Activated CD8-positive, alpha-beta T cell treated with anti-CD3 and anti-CD28 coated beads, Interleukin-2, amount 10 ng/mL, durations not matched to agents 7 days and 5 days (primary cell): ENCODE measurements at regions of chr1 and their contacts with region 1.

Region 1: DNA sequence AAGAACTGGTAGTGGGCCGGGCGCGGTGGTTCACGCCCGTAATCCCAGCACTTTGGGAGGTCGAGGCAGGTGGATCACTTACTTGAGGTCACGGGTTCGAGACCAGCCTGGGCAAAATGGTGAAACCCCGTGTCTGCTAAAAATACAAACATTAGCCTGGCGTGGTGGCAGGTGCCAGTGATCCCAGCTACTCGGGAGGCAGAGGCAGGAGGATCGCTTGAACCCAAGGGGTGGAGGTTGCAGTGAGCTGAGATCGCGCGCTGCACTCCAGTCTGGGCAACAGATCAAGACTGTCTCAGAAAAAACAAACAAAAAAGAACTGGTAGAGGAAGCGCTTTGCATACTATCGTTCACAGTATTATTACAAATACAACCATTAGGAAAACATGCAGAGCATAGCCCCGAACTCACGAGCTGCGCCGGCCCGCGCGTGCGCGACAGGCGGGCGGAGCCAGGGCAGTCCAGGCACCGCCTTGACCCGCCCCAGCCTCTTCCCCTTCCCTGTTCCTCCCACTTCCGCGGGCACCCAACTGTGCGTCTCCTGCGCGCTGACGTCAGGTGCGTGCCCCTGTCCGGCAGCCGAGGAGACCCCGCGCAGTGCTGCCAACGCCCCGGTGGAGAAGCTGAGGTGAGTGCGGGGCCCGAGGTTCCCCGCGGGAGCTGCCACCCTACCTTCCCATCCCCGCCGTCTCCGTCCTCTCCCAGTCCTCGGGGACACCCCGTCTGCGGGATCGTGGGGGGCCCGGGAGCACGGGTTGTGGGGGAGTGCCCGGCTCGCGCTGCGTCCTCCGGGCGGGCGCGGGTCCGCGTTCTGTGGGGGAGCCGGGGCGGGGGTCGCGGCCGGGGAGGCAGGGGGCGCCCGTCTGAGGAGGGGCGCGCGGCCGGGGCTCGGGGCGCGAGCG is at the start of gene CDC42:
- DNase-seq: peak; percentile 98
- ATAC-seq: peak; percentile 92
- H3K4me3 Mint-ChIP-seq: peak within 1 kb of the TSS; percentile 93
- H3K27ac Mint-ChIP-seq: peak within 1 kb of the TSS; percentile 96
- H3K4me1 Mint-ChIP-seq: peaks cover 66% of the 10 kb centered on the region
- H3K27me3 Mint-ChIP-seq: no peaks in the 10 kb centered on the region
- total RNA-seq, gene CDC42: 365 to 389 TPM

Region 2: GRCh38 chr1:22025368-22026155 is 26.8 kb before region 1 on chr1:
- CTCF ChIA-PET with region 1: interaction called, 210 read pairs
- POLR2A ChIA-PET with region 1: interaction called, 310 read pairs
- DNase-seq: peak; percentile 93
- ATAC-seq: peak; percentile 65
- H3K4me3 Mint-ChIP-seq: peak overlapping the region; percentile 89
- H3K27ac Mint-ChIP-seq: peak overlapping the region; percentile 97
- H3K4me1 Mint-ChIP-seq: peaks cover 60% of the 10 kb centered on the region
- H3K27me3 Mint-ChIP-seq: no peaks in the 10 kb centered on the region

Region 3: GRCh38 chr1:22031214-22031962 is 21.0 kb before region 1 on chr1:
- CTCF ChIA-PET with region 1: interaction called, 210 read pairs
- POLR2A ChIA-PET with region 1: interaction called, 310 read pairs
- DNase-seq: peak; percentile 33
- ATAC-seq: peak; percentile 75
- H3K4me3 Mint-ChIP-seq: peak overlapping the region; percentile 4
- H3K27ac Mint-ChIP-seq: peak overlapping the region; percentile 75
- H3K4me1 Mint-ChIP-seq: peaks cover 40% of the 10 kb centered on the region
- H3K27me3 Mint-ChIP-seq: no peaks in the 10 kb centered on the region

Region 4: GRCh38 chr1:22039594-22040285 is 12.6 kb before region 1 on chr1:
- CTCF ChIA-PET with region 1: interaction called, 210 read pairs
- POLR2A ChIA-PET with region 1: interaction called, 168 read pairs
- DNase-seq: peak; percentile 97
- ATAC-seq: peak; percentile 97
- H3K4me3 Mint-ChIP-seq: peak overlapping the region; percentile 71
- H3K27ac Mint-ChIP-seq: peak overlapping the region; percentile 99
- H3K4me1 Mint-ChIP-seq: peaks cover 52% of the 10 kb centered on the region
- H3K27me3 Mint-ChIP-seq: no peaks in the 10 kb centered on the region

Region 5: DNA sequence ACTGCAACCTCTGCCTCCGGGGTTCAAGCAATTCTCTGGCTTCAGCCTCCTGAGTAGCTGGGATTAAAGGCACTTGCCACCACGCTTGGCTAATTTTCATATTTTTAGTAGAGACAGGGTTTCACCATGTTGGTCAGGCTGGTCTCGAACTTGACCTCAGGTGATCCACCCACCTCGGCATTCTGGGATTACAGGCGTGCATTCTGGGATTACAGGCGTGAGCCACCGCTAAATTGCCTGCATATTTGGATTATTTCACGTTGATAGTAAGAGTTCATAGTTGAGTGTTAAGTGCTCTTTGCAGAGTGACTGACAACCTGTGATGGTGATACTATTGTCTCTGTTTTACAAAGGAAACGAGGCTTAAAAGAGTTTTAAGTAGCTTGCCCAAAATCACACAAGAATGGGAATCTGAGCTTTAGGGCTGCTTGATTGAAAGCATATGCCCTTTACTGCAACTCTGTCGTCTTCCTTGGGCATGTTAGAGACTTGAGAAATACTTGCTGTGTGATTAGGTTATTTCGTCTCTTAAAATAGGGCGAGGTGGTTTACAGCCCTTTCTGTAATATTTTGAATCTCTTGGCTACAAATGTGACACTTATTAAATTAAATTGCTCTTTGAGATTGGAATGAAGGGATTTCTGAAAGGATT is 12.5 kb after region 1 on chr1:
- CTCF ChIA-PET with region 1: no interaction called
- POLR2A ChIA-PET with region 1: interaction called, 10 read pairs
- DNase-seq: no peak
- ATAC-seq: no peak
- H3K4me3 Mint-ChIP-seq: no peak overlapping the region
- H3K27ac Mint-ChIP-seq: no peak overlapping the region
- H3K4me1 Mint-ChIP-seq: peaks cover 81% of the 10 kb centered on the region
- H3K27me3 Mint-ChIP-seq: no peaks in the 10 kb centered on the region

Region 6: GRCh38 chr1:22089787-22090186 is 37.4 kb after region 1 on chr1:
- CTCF ChIA-PET with region 1: interaction called, 6 read pairs
- POLR2A ChIA-PET with region 1: interaction called, 10 read pairs
- DNase-seq: peak; percentile 52
- ATAC-seq: peak; percentile 75
- H3K4me3 Mint-ChIP-seq: peak overlapping the region; percentile 62
- H3K27ac Mint-ChIP-seq: peak overlapping the region; percentile 87
- H3K4me1 Mint-ChIP-seq: peaks cover 88% of the 10 kb centered on the region
- H3K27me3 Mint-ChIP-seq: no peaks in the 10 kb centered on the region

Region 7: GRCh38 chr1:22105611-22106207 is 53.3 kb after region 1 on chr1:
- CTCF ChIA-PET with region 1: interaction called, 3 read pairs
- POLR2A ChIA-PET with region 1: interaction called, 14 read pairs
- DNase-seq: peak; percentile 52
- ATAC-seq: peak; percentile 31
- H3K4me3 Mint-ChIP-seq: peak overlapping the region; percentile 44
- H3K27ac Mint-ChIP-seq: peak overlapping the region; percentile 92
- H3K4me1 Mint-ChIP-seq: peaks cover 56% of the 10 kb centered on the region
- H3K27me3 Mint-ChIP-seq: no peaks in the 10 kb centered on the region

Region 8: DNA sequence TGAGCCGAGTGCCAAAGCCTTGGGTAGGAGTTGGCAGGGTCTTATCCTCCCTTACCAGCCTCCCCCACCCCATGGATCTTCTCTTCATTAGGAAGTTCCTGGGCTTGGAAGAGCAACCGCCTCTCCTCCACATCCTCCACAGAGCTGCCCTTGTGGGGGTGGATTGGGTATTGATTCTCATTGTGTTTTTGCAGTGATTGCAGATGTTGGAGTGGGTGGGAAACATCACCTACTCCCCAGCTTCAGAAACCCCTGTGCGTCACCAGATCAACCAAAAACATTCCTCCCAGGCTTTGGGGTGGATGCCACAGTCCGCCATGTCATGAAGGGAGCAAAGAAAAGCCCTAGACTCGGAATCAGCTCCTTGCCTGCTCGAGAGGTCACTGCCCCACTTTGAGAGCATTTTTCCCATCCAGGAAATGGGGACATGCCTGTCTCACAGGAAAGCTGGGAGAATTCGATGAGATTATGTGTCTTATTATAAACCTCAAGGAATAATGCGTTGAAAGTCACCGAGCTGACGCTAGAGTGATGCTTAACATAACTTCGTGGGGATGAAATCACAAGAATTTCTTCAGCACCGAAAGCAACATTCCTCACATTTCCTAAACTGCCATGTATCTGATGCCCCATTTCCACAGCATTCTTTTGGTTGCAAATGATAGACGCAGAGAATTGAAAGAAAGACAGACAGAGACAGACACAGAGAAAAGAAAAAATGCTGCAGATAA is 354.5 kb after region 1 on chr1:
- CTCF ChIA-PET with region 1: no interaction called
- POLR2A ChIA-PET with region 1: no interaction called
- DNase-seq: no peak
- ATAC-seq: no peak
- H3K4me3 Mint-ChIP-seq: no peak overlapping the region
- H3K27ac Mint-ChIP-seq: no peak overlapping the region
- H3K4me1 Mint-ChIP-seq: no peaks in the 10 kb centered on the region
- H3K27me3 Mint-ChIP-seq: peaks cover 60% of the 10 kb centered on the region